ENCODE measurements at regions of chr7 and their contacts with region 1.

Region 1: DNA sequence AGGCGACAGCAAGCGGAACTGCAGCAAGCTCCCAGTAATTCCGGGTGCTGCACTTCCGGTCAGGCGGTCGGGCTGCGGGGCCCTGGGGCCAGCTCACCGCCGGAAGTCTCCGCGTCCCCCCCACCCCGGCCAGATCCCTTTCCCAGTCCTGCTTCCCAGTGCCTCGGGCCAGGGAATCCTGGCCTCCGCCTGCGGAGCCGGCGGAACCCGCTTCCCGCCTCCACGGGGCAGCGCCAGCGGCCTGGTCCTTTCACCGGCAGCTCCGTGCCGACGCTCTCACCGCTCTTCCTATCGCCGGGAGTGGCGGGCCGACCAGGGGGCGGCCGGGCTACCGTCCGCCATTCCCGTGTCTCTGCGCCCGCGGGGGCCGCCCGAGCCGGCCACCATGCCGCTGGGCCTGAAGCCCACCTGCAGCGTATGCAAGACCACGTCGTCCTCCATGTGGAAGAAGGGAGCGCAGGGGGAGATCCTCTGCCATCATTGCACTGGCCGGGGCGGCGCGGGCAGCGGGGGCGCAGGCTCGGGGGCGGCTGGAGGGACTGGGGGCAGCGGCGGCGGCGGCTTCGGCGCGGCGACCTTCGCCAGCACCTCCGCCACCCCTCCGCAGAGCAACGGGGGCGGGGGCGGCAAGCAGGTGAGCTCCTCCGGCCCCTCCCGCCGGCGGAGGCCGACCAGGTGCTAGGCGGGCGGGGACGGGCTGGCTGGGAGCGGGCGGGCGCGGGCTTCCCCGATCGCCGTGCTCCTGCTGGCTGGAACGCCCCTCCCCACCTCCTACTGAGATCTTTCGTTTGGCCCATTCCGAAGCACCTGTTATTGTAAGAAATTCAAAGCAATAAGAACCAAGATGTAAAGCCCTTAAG is at the start of gene GATAD1:
- DNase-seq: peak; percentile 82
- ATAC-seq: peak; percentile 81
- H3K4me3 Mint-ChIP-seq: peak within 1 kb of the TSS; percentile 89
- H3K27ac Mint-ChIP-seq: peak within 1 kb of the TSS; percentile 92
- H3K4me1 Mint-ChIP-seq: peaks cover 10% of the 10 kb centered on the region
- H3K27me3 Mint-ChIP-seq: no peaks in the 10 kb centered on the region
- total RNA-seq, gene GATAD1: 24.9 to 28.0 TPM

Region 2: DNA sequence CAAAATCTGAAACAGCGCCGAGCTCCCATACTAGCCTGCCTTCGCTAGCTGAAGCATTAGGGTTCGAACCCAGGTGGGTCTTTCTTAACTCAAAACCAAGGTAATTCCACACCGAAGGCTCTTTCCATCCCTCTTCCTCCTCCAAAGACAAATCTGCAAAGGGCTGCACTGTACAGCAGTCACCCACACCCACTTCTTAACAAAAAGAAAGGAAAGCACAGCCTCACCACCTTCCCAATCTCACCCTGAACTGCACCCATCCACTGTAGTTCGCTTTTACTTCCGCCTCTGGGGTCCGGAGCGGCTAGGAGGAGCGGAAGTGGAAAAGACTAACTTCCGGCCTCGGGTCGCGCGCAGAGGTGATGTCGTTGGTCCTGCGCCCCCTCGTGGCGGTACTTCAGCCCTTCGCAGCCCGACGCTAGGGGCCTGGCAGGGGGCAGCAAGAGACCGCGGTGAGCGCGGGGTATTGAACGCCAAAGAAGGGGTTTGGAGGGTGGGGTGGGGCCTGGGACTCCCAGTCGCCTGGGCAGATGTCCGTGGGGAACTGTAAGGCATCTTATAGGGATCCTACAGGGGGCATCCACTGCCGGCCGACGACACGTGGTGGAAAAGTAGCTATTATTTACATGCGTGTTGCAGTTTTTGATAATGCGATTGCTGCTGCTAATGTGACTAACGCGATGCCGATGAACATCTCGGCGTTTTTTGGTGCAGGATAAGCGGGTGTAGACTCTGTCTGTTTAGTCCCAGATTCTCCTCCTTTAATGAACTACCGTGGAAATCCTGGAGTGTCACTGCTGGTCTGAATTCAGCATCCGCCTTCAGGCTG is 566.9 kb before region 1 on chr7 and contains the start of gene MTERF1:
- POLR2A ChIA-PET with region 1: interaction called, 12 read pairs
- DNase-seq: peak; percentile 94
- ATAC-seq: peak; percentile 96
- H3K4me3 Mint-ChIP-seq: peak within 1 kb of the TSS; percentile 94
- H3K27ac Mint-ChIP-seq: peak within 1 kb of the TSS; percentile 94
- H3K4me1 Mint-ChIP-seq: peaks cover 27% of the 10 kb centered on the region
- H3K27me3 Mint-ChIP-seq: no peaks in the 10 kb centered on the region
- total RNA-seq, gene MTERF1: 20.9 to 24.4 TPM

Region 3: GRCh38 chr7:91940572-91941341 is 506.8 kb before region 1 on chr7 and contains the start of gene AKAP9:
- POLR2A ChIA-PET with region 1: interaction called, 10 read pairs
- DNase-seq: peak; percentile 90
- ATAC-seq: peak; percentile 93
- H3K4me3 Mint-ChIP-seq: peak within 1 kb of the TSS; percentile 97
- H3K27ac Mint-ChIP-seq: peak within 1 kb of the TSS; percentile 98
- H3K4me1 Mint-ChIP-seq: peaks cover 21% of the 10 kb centered on the region
- H3K27me3 Mint-ChIP-seq: no peaks in the 10 kb centered on the region
- total RNA-seq, gene AKAP9: 49.0 to 50.9 TPM

Region 4: GRCh38 chr7:92134271-92135051 is 313.1 kb before region 1 on chr7 and contains the start of gene CYP51A1:
- POLR2A ChIA-PET with region 1: interaction called, 10 read pairs
- DNase-seq: peak; percentile 95
- ATAC-seq: peak; percentile 91
- H3K4me3 Mint-ChIP-seq: peak within 1 kb of the TSS; percentile 94
- H3K27ac Mint-ChIP-seq: peak within 1 kb of the TSS; percentile 99
- H3K4me1 Mint-ChIP-seq: peaks cover 24% of the 10 kb centered on the region
- H3K27me3 Mint-ChIP-seq: peaks cover 2% of the 10 kb centered on the region
- total RNA-seq, gene CYP51A1: 26.8 to 29.1 TPM

Region 5: GRCh38 chr7:92245487-92246362 is 201.8 kb before region 1 on chr7 and contains the starts of genes ANKIB1 and KRIT1:
- POLR2A ChIA-PET with region 1: interaction called, 29 read pairs
- DNase-seq: peak; percentile 88
- ATAC-seq: peak; percentile 77
- H3K4me3 Mint-ChIP-seq: peak within 1 kb of the TSS; percentile 99
- H3K27ac Mint-ChIP-seq: peak within 1 kb of the TSS; percentile 97
- H3K4me1 Mint-ChIP-seq: peaks cover 23% of the 10 kb centered on the region
- H3K27me3 Mint-ChIP-seq: no peaks in the 10 kb centered on the region
- total RNA-seq, gene ANKIB1: 75.5 to 77.6 TPM
- total RNA-seq, gene KRIT1: 46.4 to 54.2 TPM

Region 6: GRCh38 chr7:92423710-92424131 is 23.9 kb before region 1 on chr7:
- POLR2A ChIA-PET with region 1: interaction called, 20 read pairs
- DNase-seq: no peak
- ATAC-seq: no peak
- H3K4me3 Mint-ChIP-seq: peak overlapping the region; percentile 60
- H3K27ac Mint-ChIP-seq: peak overlapping the region; percentile 41
- H3K4me1 Mint-ChIP-seq: peaks cover 12% of the 10 kb centered on the region
- H3K27me3 Mint-ChIP-seq: peaks cover 19% of the 10 kb centered on the region

Region 7: GRCh38 chr7:92528188-92528957 is 80.8 kb after region 1 on chr7 and contains the starts of genes PEX1 and RBM48:
- POLR2A ChIA-PET with region 1: interaction called, 13 read pairs
- DNase-seq: peak; percentile 89
- ATAC-seq: peak; percentile 94
- H3K4me3 Mint-ChIP-seq: peak within 1 kb of the TSS; percentile 90
- H3K27ac Mint-ChIP-seq: peak within 1 kb of the TSS; percentile 96
- H3K4me1 Mint-ChIP-seq: peaks cover 21% of the 10 kb centered on the region
- H3K27me3 Mint-ChIP-seq: no peaks in the 10 kb centered on the region
- total RNA-seq, gene PEX1: 23.5 to 24.4 TPM
- total RNA-seq, gene RBM48: 22.6 to 24.2 TPM

Region 8: DNA sequence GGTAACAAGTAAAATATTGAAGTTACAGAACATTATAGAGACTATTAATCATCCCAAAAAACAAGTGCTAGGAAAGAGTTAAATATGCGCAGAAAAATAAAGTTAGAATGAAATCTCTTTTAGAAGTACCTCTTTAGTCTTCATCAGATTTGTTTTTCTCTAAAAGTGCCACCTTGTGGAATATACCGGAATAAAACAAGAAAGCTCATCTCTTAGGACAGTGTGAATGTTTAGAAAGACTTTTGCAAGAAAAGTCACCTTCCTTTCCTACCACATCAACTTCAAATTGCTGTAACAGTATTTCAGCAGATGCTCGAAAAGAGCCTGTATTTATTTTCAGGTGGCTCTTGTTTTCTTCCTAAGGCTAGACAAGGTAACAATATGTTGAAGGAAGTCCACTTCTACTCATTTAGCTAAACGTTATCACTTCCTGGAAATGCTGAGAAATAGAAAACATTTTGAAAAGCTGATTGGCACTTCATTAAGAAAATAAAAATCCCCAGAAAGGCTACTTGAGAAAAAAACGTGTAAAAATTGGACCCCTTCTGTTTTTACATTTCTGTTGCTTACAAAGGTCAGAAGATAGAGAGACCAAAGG is 162.4 kb after region 1 on chr7:
- POLR2A ChIA-PET with region 1: no interaction called
- DNase-seq: no peak
- ATAC-seq: peak; percentile 67
- H3K4me3 Mint-ChIP-seq: no peak overlapping the region
- H3K27ac Mint-ChIP-seq: peak overlapping the region; percentile 34
- H3K4me1 Mint-ChIP-seq: peaks cover 9% of the 10 kb centered on the region
- H3K27me3 Mint-ChIP-seq: no peaks in the 10 kb centered on the region

Measured in activated naive CD8-positive, alpha-beta T cell treated with anti-CD3 and anti-CD28 coated beads, Interleukin-2, amount 10 ng/mL, durations not matched to agents 7 days and 5 days (primary cell).